ENCODE measurements at regions of chr6 and their contacts with region 1.

Region 1: DNA sequence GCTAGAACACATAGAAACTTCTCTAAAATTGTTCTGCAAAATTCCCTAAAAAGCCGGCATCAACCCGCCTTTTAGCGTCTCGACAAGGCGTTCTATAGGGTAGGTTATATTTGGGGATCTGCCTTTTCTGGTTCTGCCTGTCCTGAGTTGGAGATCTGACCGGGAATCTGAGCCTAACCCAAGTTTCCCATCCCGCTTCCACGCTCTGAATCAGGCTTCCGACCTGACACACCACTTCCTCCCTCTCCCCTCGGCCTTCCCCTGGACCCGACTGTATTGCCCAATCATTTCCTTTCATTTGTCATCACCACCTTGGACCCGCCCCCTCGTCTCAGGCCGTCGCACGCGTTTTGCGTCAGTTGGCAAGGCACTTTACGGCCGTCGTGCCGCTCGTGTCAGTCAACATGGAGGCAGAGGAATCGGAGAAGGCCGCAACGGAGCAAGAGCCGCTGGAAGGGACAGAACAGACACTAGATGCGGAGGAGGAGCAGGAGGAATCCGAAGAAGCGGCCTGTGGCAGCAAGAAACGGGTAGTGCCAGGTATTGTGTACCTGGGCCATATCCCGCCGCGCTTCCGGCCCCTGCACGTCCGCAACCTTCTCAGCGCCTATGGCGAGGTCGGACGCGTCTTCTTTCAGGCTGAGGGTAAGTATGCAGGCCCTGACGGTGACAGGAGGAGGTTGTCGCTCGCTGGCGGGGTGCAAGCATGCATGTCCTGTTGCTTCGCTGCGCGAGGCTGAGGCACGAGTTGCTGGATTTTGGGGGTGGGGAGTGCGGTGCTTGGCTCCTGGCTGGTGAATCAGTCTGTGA is at the start of gene ABT1:
- DNase-seq: peak; percentile 97
- H3K4me3 Mint-ChIP-seq: no peak within 1 kb of the TSS
- H3K27ac Mint-ChIP-seq: no peak within 1 kb of the TSS
- H3K4me1 Mint-ChIP-seq: peaks cover 39% of the 10 kb centered on the region
- H3K27me3 Mint-ChIP-seq: peaks cover 27% of the 10 kb centered on the region
- total RNA-seq, gene ABT1: 32.6 and 32.9 TPM in 2 replicates

Region 2: DNA sequence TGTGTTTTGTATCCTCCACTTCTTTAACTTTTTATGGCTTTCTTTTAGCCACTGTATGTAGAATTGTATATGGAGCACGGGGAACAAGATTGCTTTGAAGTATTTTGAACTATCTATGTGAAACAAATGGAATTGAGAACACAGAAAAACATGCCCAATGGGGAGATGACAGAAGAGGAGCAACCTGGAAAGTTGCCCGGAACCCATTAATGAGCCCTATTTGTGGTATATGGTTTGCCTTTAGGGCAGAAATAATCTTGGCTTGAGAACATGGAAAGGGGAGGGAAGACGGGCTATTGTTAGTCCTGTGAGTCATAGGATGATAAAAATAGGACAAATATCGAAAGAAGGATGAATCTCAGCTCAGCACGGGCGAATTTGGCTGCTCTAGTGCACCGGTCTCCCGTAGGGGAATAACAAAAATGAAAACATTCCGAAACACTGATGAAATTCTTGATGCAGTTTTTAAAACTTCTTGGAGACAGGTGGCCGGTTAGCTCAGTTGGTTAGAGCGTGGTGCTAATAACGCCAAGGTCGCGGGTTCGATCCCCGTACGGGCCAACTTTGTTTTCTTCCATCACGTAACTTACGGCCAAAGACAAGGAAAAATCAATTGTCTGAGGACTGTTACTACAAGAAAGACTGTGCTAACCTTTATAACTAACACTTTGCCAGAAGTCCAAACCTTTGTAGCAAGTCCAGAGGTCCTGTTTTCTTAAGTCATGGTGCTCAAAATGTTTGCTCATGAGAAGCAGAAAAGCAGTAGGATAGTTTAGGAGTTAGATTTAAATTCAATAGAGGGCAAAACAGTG is 42.9 kb before region 1 on chr6:
- intact Hi-C with region 1: loop called (anchors 1 kb)
- DNase-seq: peak; percentile 72
- H3K4me3 Mint-ChIP-seq: no peak overlapping the region
- H3K27ac Mint-ChIP-seq: no peak overlapping the region
- H3K4me1 Mint-ChIP-seq: peaks cover 18% of the 10 kb centered on the region
- H3K27me3 Mint-ChIP-seq: peaks cover 2% of the 10 kb centered on the region

Region 3: GRCh38 chr6:26568601-26569432 is 28.0 kb before region 1 on chr6:
- intact Hi-C with region 1: loop called (anchors 1 kb)
- DNase-seq: peak; percentile 94
- H3K4me3 Mint-ChIP-seq: peak overlapping the region; percentile 93
- H3K27ac Mint-ChIP-seq: peak overlapping the region; percentile 98
- H3K4me1 Mint-ChIP-seq: peaks cover 47% of the 10 kb centered on the region
- H3K27me3 Mint-ChIP-seq: peaks cover 5% of the 10 kb centered on the region

Region 4: DNA sequence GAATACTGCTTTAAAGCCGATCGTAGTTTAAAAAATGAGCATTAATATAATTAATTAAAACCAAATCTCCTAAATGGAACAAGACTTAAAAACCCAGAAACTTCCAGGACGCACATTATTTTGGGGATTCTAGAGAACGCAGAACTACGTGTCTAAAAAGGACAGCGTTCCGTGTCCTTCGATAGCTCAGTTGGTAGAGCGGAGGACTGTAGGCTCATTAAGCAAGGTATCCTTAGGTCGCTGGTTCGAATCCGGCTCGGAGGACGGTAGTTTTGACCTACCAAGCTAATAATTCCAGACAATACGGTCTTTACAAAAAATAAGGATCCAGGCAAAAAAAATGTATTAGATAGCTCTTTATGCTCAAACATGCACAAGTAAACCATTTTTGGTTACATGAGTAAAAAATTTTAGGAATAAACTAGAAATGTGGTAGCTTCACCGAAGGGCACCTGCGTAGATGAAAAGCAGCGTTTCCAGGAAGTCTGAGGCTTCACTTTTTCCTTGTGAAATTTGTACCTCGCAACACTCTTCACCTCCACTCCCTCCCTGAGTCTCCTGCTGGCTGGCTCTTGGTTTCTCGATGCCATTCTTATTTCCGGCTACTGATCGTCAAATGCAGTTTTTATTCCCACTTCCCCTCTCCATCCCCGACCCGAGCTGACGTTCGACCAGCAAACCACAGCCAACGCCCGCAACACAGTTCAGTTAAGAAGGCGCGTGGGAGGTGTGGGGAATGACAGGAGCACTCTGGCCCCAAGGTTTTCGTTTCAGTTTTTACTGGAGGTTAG is 19.7 kb before region 1 on chr6:
- intact Hi-C with region 1: loop called (anchors 1 kb)
- DNase-seq: peak; percentile 36
- H3K4me3 Mint-ChIP-seq: peak overlapping the region; percentile 84
- H3K27ac Mint-ChIP-seq: peak overlapping the region; percentile 83
- H3K4me1 Mint-ChIP-seq: peaks cover 42% of the 10 kb centered on the region
- H3K27me3 Mint-ChIP-seq: peaks cover 17% of the 10 kb centered on the region

Region 5: GRCh38 chr6:26607434-26608230 is 10.8 kb after region 1 on chr6:
- intact Hi-C with region 1: loop called (anchors 1 kb)
- DNase-seq: peak; percentile 58
- H3K4me3 Mint-ChIP-seq: peak overlapping the region; percentile 56
- H3K27ac Mint-ChIP-seq: no peak overlapping the region
- H3K4me1 Mint-ChIP-seq: peaks cover 20% of the 10 kb centered on the region
- H3K27me3 Mint-ChIP-seq: peaks cover 16% of the 10 kb centered on the region

Region 6: GRCh38 chr6:26659042-26659999 is 62.5 kb after region 1 on chr6 and contains the start of gene ZNF322:
- intact Hi-C with region 1: loop called (anchors 1 kb)
- DNase-seq: peak; percentile 88
- H3K4me3 Mint-ChIP-seq: peak within 1 kb of the TSS; percentile 79
- H3K27ac Mint-ChIP-seq: peak within 1 kb of the TSS; percentile 0
- H3K4me1 Mint-ChIP-seq: peaks cover 43% of the 10 kb centered on the region
- H3K27me3 Mint-ChIP-seq: peaks cover 4% of the 10 kb centered on the region
- total RNA-seq, gene ZNF322: 8.8 and 9.1 TPM in 2 replicates